HepG2 (cell line): ENCODE measurements at regions of chr1 and their contacts with region 1.

Region 1: GRCh38 chr1:2108213-2108876 is 58.1 kb downstream of the PRKCZ start:
- DNase-seq: peak; percentile 40
- ATAC-seq: peak; percentile 17
- H3K4me3 ChIP-seq: no peak overlapping the region
- H3K27ac ChIP-seq: no peak overlapping the region
- H3K4me1 ChIP-seq: peaks cover 26% of the 10 kb centered on the region
- H3K27me3 ChIP-seq: no peaks in the 10 kb centered on the region
- CTCF ChIP-seq: peak; percentile 68
- EP300 ChIP-seq: no peak
- POLR2A ChIP-seq: no peak
- RAD21 ChIP-seq: peak; percentile 68

Region 2: GRCh38 chr1:2055911-2056575 is 52.3 kb before region 1 on chr1:
- CTCF ChIA-PET with region 1: no interaction called
- POLR2A ChIA-PET with region 1: no interaction called
- in situ Hi-C with region 1: no loop called
- intact Hi-C with region 1: no loop called
- DNase-seq: no peak
- ATAC-seq: no peak
- H3K4me3 ChIP-seq: no peak overlapping the region
- H3K27ac ChIP-seq: no peak overlapping the region
- H3K4me1 ChIP-seq: peaks cover 27% of the 10 kb centered on the region
- H3K27me3 ChIP-seq: no peaks in the 10 kb centered on the region
- CTCF ChIP-seq: 0 out of 2 replicates have a peak, but pooled peaks have one; percentile 6
- EP300 ChIP-seq: no peak
- POLR2A ChIP-seq: no peak
- RAD21 ChIP-seq: no peak

Region 3: DNA sequence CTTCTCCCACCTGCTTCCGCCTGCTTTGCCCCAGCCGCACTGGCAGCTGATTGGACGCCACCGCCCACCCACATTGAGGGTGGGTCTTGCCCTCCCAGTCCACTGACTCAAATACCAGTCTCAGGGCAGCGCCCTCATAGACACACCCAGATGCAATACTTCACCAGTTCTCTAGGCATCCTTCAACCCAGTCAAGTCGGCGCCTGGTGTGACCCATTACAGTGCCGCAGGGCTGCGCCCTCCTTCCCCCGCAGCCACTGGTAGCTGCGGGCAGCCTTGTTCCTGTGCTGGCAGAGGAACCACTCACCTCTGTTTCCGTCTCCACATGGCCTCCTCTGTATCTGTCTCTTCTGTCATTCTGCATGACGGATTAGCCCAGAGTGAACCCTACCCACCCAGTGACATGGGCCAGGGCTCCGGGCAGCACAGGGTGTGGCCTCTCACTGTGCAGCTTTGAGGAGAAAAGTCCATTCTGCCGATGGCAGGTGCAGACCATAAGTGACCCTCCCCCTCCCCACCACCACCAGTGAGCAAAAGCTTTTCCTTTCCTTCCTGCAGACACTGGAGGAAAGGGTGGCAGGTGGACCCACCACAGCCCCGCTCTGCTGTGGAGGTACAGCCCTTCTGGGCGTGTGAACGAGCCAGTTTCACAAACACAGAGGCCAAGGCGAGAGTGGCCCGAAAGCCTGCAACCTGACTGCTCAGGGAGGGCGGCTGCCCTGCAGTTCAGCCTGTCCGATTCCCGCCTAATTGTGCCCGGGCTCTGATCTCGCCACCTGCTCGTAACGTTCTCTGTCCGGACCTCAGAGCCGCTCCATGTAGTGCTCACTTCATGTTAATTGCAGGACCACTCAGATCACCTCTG is 29.1 kb after region 1 on chr1:
- CTCF ChIA-PET with region 1: interaction called, 8 read pairs
- POLR2A ChIA-PET with region 1: interaction called, 12 read pairs
- in situ Hi-C with region 1: loop called (anchors 5 kb)
- intact Hi-C with region 1: loop called (anchors 1 kb)
- DNase-seq: peak; percentile 49
- ATAC-seq: peak; percentile 38
- H3K4me3 ChIP-seq: peak overlapping the region in 2 of 3 experiments; percentile 22 to 54; a peak in 5 of 6 replicates
- H3K27ac ChIP-seq: peak overlapping the region; percentile 74
- H3K4me1 ChIP-seq: peaks cover 75% of the 10 kb centered on the region
- H3K27me3 ChIP-seq: no peaks in the 10 kb centered on the region
- CTCF ChIP-seq: 0 out of 2 replicates have a peak, but pooled peaks have one; percentile 2
- EP300 ChIP-seq: no peak
- POLR2A ChIP-seq: no peak
- RAD21 ChIP-seq: no peak

Region 4: DNA sequence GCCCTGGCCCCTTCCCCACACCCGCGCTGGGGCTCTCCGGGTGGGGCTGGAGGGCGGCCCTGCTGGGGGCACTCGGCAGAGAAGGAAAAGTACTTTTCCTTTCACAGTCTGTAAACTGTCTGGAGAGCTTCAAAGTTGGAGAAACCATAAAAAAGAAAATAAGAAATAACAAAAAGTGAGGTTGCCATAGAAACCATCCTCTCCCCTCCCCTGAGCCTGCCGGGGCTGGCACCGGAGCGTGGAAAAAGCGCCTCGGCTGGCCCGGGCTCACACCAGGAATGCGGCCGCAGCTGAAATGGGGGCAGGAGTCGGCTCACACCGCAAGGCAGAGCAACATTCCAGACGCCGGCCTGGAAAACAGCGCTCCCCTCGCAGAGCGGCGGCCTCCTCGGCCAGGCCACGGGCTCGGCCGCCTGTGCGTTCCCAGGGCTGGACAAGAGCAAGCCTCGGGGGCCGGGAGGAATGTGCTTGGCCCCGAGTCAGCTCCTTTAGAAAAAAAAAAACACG is 213.8 kb after region 1 on chr1:
- CTCF ChIA-PET with region 1: no interaction called
- POLR2A ChIA-PET with region 1: no interaction called
- in situ Hi-C with region 1: no loop called
- intact Hi-C with region 1: no loop called
- DNase-seq: peak; percentile 34
- ATAC-seq: peak; percentile 57
- H3K4me3 ChIP-seq: peak overlapping the region in 2 of 3 experiments; percentile 5 to 36; a peak in 2 of 6 replicates
- H3K27ac ChIP-seq: no peak overlapping the region
- H3K4me1 ChIP-seq: peaks cover 28% of the 10 kb centered on the region
- H3K27me3 ChIP-seq: peaks cover 21 to 78% of the 10 kb centered on the region in 2 experiments
- CTCF ChIP-seq: peak; percentile 32
- EP300 ChIP-seq: no peak
- POLR2A ChIP-seq: no peak
- RAD21 ChIP-seq: no peak